Psoas muscle (tissue), 8 donors: ENCODE measurements at regions of chr12 and their contacts with region 1.

Region 1: DNA sequence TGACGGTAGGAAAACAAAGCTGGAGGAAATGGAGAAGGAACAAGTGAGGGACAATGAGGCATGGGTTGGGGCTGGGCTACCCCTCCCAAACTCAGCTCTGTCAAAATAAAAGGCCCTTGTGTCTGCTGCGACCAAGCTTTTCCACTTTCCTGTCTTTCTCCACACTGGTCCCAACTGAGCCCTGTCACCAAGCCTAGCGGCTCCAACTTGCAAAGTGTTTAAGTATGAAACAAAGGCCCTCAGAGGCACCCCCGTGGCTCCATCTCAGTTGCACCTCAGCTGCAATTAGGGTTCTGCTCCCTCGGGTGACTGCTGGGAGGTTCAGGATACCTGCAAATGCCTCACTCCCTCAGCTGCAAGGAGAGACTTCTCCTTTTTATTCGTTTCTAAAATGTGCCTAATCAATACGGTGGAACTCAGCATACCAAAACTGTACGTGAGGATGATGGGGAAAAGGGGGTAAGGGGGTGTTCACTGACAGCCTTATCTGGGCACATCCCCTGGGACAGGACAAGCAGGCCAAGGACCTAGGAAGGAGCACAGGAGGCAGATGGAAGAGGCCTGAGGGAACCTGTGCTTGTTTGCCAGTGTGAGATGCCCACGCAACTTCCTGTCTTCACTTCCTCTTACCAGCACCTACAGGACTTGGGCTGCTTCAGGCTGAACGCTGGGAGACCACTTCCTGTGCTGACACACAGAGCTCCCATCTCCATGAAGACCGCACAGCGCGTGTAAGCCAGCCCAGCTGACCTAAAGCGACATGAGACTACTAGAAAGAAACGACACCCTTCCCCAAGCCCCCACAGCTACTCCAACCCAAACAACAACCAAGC is 8.9 kb downstream of the VAMP1 start:
- DNase-seq: peak in 1 of 2 donors; percentile 65
- ATAC-seq: no peak
- H3K4me3 ChIP-seq: no peak overlapping the region
- H3K27ac ChIP-seq: peak overlapping the region; percentile 72
- H3K4me1 ChIP-seq: peaks cover 15% of the 10 kb centered on the region
- H3K27me3 ChIP-seq: no peaks in the 10 kb centered on the region
- CTCF ChIP-seq: no peak

Region 2: GRCh38 chr12:6335451-6336078 is 126.1 kb before region 1 on chr12:
- intact Hi-C with region 1: loop called in 1 of 2 experiments (anchors 5 kb)
- DNase-seq: peak; percentile 84 to 86
- ATAC-seq: peak; percentile 59 to 70 (median 62)
- H3K4me3 ChIP-seq: peak overlapping the region; percentile 99
- H3K27ac ChIP-seq: peak overlapping the region; percentile 88
- H3K4me1 ChIP-seq: peaks cover 56% of the 10 kb centered on the region
- H3K27me3 ChIP-seq: no peaks in the 10 kb centered on the region
- CTCF ChIP-seq: peak; percentile 42

Region 3: DNA sequence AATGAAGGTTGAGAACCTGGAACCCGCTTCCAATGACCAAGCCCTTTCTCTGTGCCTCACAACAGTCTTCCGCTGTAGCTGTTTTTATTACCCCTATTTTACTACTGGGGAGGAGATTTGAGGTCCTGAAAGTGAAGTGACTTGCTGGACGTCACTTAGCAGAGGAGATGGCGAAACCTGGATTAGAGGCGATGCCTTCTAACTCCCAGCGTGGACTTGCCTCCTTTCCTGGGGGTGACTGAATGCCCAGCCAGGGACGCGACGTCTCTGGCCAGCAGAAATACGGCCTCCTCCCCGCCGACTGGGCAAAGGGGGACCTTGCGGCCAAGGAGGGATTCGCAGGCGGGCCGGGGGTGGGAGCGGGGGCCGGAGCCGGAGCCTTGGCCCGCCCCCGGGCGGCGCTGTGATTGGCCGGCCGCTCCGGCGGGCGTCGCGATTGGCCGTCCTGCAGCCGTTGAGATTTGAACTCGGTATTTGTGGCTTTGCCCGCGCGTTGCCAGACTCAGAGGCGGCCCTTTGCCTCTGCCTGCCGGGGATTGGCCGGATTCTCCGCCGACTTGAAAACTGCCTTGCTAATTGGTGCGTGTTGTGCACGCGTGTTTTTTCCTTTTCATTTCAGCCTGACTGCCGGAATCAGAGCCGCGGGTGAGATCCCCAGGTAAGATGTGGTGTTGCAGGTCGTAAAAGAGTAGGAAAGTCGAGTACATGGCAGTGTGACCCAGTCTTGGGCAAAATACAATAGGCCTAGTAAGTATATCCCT is 32.1 kb after region 1 on chr12 and contains the start of gene NCAPD2:
- intact Hi-C with region 1: no loop called
- DNase-seq: peak; percentile 94 to 97
- ATAC-seq: peak; percentile 94
- H3K4me3 ChIP-seq: peak within 1 kb of the TSS; percentile 89
- H3K27ac ChIP-seq: peak within 1 kb of the TSS; percentile 99
- H3K4me1 ChIP-seq: peaks cover 21% of the 10 kb centered on the region
- H3K27me3 ChIP-seq: no peaks in the 10 kb centered on the region
- CTCF ChIP-seq: peak; percentile 22
- total RNA-seq, gene NCAPD2: 10.1 to 13.4 (median 11.2) TPM

Region 4: DNA sequence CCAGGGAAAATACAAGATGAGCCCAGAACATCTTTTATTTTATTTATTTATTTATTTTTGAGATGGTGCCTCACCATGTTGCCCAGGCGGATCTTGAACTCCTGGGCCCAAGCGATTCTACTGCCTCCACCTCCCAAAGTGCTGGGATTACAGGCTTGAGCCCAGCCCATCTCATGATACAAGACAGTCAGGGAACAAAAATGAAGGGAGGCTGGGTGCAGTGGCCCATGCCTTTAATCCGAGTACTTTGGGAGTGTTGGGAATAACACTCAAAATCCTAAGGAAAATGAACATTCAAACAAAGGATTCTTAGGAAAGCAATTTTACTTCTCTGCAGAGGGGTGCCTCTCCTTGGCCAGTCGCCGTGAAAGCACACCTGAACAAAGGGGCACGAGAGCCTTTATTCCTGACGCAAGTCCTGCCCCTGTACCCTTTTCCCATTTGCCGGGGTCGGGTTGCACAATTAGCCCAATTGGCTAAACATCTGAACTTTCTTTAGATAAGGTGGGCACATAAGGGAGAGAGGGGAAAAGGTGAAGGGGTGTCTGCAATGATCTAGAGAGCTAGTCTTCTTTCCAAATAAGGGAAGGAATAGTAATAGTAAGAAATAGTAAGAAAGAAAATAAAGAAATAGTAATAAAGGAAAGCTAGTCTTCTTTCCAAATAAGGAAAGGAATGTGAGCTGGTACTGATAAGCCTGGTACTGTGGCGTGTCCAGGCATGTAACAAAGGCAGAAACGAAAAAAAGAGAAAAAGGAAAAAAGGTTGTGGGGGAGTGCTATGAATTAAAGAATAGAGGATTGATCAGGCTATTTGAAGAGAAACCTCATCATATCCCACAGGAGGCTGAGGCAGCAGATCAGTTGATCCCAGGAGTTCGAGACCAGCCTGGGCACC is 45.7 kb after region 1 on chr12:
- intact Hi-C with region 1: no loop called
- DNase-seq: no peak
- ATAC-seq: no peak
- H3K4me3 ChIP-seq: no peak overlapping the region
- H3K27ac ChIP-seq: no peak overlapping the region
- H3K4me1 ChIP-seq: no peaks in the 10 kb centered on the region
- H3K27me3 ChIP-seq: no peaks in the 10 kb centered on the region
- CTCF ChIP-seq: no peak

Region 5: DNA sequence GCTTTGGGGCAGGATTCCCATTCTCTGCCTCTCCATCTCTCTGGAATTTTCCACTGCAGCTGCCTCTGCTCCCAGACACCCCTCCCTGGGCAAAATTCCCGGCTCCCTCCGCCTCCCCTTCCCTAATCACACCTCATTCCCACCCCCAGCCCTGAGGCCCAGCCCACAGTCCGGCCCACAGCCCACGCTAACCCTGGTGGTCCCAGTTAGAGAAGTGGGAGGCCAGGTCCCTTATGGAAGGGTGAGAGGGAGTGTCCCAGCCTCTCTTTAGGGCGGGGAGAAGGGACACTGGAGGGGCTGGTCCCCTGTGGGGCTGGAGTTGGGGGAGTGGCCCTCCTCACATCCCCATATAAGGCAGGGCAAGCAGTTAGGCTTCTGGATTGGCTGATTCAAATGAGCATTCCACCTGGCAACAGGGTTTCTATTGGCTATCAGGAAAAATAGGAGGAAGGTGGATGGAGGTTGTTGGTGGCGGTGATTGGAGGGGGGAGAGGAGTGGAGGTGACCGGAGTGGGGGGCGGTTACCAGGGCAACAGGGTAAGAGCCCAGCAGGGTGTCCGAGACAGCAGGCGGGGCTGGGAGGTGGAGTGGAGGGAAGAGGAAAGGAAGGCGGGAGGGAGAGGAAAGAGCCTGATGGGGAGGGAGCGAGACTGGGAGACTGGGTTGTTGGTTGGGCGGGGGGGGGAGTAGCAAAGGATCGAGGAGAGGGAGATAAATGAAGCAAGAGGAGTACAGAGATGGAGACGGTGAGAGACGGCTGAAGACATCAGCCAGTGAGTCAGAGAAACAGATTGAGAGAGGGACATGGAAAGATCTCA is 302.6 kb after region 1 on chr12:
- intact Hi-C with region 1: no loop called
- DNase-seq: peak; percentile 90 to 94
- ATAC-seq: peak; percentile 82 to 89 (median 86)
- H3K4me3 ChIP-seq: peak overlapping the region; percentile 84
- H3K27ac ChIP-seq: peak overlapping the region; percentile 80
- H3K4me1 ChIP-seq: peaks cover 25% of the 10 kb centered on the region
- H3K27me3 ChIP-seq: peaks cover 0 to 9% (median 0%) of the 10 kb centered on the region in 3 donors
- CTCF ChIP-seq: no peak